CD4-positive, alpha-beta T cell (primary cell): ENCODE measurements at regions of chr3 and their contacts with region 1.

Region 1: GRCh38 chr3:643376-643775 is 446.8 kb downstream of the CHL1 start:
- DNase-seq: no peak
- ATAC-seq: no peak
- H3K4me3 ChIP-seq: no peak overlapping the region
- H3K4me3 Mint-ChIP-seq: no peak overlapping the region
- H3K27ac ChIP-seq: no peak overlapping the region
- H3K27ac Mint-ChIP-seq: no peak overlapping the region
- H3K4me1 ChIP-seq: no peaks in the 10 kb centered on the region
- H3K4me1 Mint-ChIP-seq: no peaks in the 10 kb centered on the region
- H3K27me3 ChIP-seq: no peaks in the 10 kb centered on the region
- H3K27me3 Mint-ChIP-seq: no peaks in the 10 kb centered on the region
- CTCF ChIP-seq: no peak

Region 2: GRCh38 chr3:229183-229661 is 414.2 kb before region 1 on chr3:
- CTCF ChIA-PET with region 1: no interaction called
- POLR2A ChIA-PET with region 1: no interaction called
- intact Hi-C with region 1: no loop called
- DNase-seq: no peak
- ATAC-seq: no peak
- H3K4me3 ChIP-seq: no peak overlapping the region
- H3K4me3 Mint-ChIP-seq: no peak overlapping the region
- H3K27ac ChIP-seq: no peak overlapping the region
- H3K27ac Mint-ChIP-seq: no peak overlapping the region
- H3K4me1 ChIP-seq: no peaks in the 10 kb centered on the region
- H3K4me1 Mint-ChIP-seq: no peaks in the 10 kb centered on the region
- H3K27me3 ChIP-seq: no peaks in the 10 kb centered on the region
- H3K27me3 Mint-ChIP-seq: no peaks in the 10 kb centered on the region
- CTCF ChIP-seq: no peak

Region 3: DNA sequence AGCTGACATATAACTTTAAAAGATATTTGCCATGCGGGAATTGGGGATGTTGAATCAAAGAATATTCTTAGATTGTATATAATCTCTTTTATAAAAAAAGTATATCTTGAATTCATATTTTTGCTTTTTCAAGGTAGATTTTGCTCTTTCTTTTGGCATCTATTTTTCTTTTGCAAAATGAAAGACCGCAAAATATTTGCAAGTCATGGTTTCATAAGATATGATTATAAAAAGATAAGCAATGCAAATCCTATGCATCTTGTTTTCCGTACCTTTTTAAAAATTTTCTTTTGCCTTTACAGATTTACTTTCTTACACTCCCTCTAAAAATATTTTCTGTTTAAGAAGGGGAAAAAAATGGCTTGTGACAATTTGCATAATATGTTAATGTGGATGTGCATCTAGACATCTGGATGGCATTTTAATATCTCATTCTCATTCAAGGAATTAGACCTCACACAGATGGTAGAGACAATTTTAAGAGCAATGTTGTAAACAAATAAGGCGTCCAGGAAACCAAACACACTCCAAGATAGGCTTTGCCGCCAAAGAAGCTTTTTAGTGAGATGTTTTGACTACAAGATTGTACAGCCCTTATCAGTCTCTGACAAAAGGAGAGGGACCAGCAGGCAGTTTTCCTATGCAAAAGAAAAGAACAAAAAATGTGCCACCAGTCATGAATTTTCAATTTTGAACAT is 75.7 kb before region 1 on chr3:
- CTCF ChIA-PET with region 1: no interaction called
- POLR2A ChIA-PET with region 1: no interaction called
- intact Hi-C with region 1: loop called in 1 of 2 experiments (anchors 2 kb)
- DNase-seq: no peak
- ATAC-seq: no peak
- H3K4me3 ChIP-seq: no peak overlapping the region
- H3K4me3 Mint-ChIP-seq: no peak overlapping the region
- H3K27ac ChIP-seq: no peak overlapping the region
- H3K27ac Mint-ChIP-seq: no peak overlapping the region
- H3K4me1 ChIP-seq: no peaks in the 10 kb centered on the region
- H3K4me1 Mint-ChIP-seq: no peaks in the 10 kb centered on the region
- H3K27me3 ChIP-seq: no peaks in the 10 kb centered on the region
- H3K27me3 Mint-ChIP-seq: no peaks in the 10 kb centered on the region
- CTCF ChIP-seq: no peak